Activated CD4-positive, alpha-beta memory T cell treated with anti-CD3 and anti-CD28 coated beads, Interleukin-2, amount 10 ng/mL, durations not matched to agents 7 days and 5 days (primary cell): ENCODE measurements at regions of chr9 and their contacts with region 1.

Region 1: GRCh38 chr9:120904061-120904977 is 22.3 kb downstream of the TRAF1 start:
- DNase-seq: peak; percentile 59
- H3K4me3 Mint-ChIP-seq: no peak overlapping the region
- H3K27ac Mint-ChIP-seq: peak overlapping the region; percentile 86
- H3K4me1 Mint-ChIP-seq: peaks cover 84% of the 10 kb centered on the region
- H3K27me3 Mint-ChIP-seq: no peaks in the 10 kb centered on the region

Region 2: DNA sequence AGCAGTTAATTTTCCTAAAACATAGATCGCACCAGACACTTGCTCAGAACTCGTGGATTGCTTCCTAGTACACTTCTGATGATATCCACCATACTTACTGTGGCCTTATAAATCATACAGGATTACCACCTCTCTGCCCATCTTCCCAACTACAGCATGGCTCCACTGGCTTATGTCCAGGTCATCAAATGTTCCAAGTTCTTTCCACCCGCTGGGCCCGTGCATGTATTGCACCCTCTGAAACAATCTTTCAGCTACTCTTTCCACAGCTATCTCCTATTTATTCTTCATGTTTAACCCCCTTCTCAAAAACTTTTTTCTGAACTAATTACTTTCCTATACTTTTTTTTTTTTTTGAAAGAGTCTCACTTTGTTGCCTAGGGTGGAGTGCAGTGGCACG is 129.6 kb before region 1 on chr9:
- CTCF ChIA-PET with region 1: no interaction called
- POLR2A ChIA-PET with region 1: no interaction called
- DNase-seq: no peak
- H3K4me3 Mint-ChIP-seq: no peak overlapping the region
- H3K27ac Mint-ChIP-seq: no peak overlapping the region
- H3K4me1 Mint-ChIP-seq: peaks cover 27% of the 10 kb centered on the region
- H3K27me3 Mint-ChIP-seq: no peaks in the 10 kb centered on the region

Region 3: DNA sequence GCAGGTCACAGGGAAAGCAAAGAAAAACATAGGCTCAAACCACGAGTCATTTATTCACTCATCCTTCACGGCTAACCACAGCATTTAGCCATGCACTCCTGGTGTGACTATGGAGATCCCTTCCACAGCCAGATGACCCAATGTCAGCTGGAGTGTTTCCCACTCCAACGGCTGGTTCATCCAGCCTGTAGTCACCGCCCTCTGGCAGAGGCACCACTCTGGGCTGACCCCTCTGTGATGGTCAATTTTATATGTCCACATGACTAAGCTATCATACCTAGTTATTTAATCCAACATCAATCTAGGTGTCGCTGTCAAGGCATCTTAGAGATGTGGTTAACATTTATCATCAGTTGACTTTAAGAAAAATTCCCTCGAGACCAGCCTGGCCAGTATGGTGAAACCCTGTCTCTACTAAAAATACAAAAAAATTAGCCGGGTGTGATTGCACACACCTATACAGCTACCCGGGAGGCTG is 17.8 kb before region 1 on chr9:
- CTCF ChIA-PET with region 1: interaction called, 4 read pairs
- POLR2A ChIA-PET with region 1: interaction called, 121 read pairs
- DNase-seq: no peak
- H3K4me3 Mint-ChIP-seq: no peak overlapping the region
- H3K27ac Mint-ChIP-seq: no peak overlapping the region
- H3K4me1 Mint-ChIP-seq: peaks cover 68% of the 10 kb centered on the region
- H3K27me3 Mint-ChIP-seq: no peaks in the 10 kb centered on the region